CD4-positive, alpha-beta T cell (primary cell): ENCODE measurements at regions of chr17 and their contacts with region 1.

Region 1: GRCh38 chr17:78313735-78314648 is 45.9 kb downstream of the SOCS3 start:
- DNase-seq: peak; percentile 29 to 88 (median 72)
- ATAC-seq: peak; percentile 79
- H3K4me3 ChIP-seq: peak overlapping the region; percentile 26
- H3K4me3 Mint-ChIP-seq: peak overlapping the region; percentile 86
- H3K27ac ChIP-seq: no peak overlapping the region
- H3K27ac Mint-ChIP-seq: peak overlapping the region; percentile 74
- H3K4me1 ChIP-seq: peaks cover 55% of the 10 kb centered on the region
- H3K4me1 Mint-ChIP-seq: peaks cover 48% of the 10 kb centered on the region
- H3K27me3 ChIP-seq: no peaks in the 10 kb centered on the region
- H3K27me3 Mint-ChIP-seq: no peaks in the 10 kb centered on the region
- CTCF ChIP-seq: no peak

Region 2: GRCh38 chr17:78128551-78129350 is 185.2 kb before region 1 on chr17 and contains the start of gene TMC6:
- CTCF ChIA-PET with region 1: no interaction called
- POLR2A ChIA-PET with region 1: no interaction called
- intact Hi-C with region 1: no loop called
- DNase-seq: peak; percentile 58 to 89 (median 75)
- ATAC-seq: peak; percentile 43
- H3K4me3 ChIP-seq: peak within 1 kb of the TSS; percentile 94
- H3K4me3 Mint-ChIP-seq: peak within 1 kb of the TSS; percentile 100
- H3K27ac ChIP-seq: peak within 1 kb of the TSS; percentile 75 to 92
- H3K27ac Mint-ChIP-seq: peak within 1 kb of the TSS; percentile 96
- H3K4me1 ChIP-seq: peaks cover 76% of the 10 kb centered on the region
- H3K4me1 Mint-ChIP-seq: peaks cover 56% of the 10 kb centered on the region
- H3K27me3 ChIP-seq: no peaks in the 10 kb centered on the region
- H3K27me3 Mint-ChIP-seq: no peaks in the 10 kb centered on the region
- CTCF ChIP-seq: no peak
- total RNA-seq, gene TMC6: 645 to 659 TPM

Region 3: GRCh38 chr17:78329263-78330059 is 15.5 kb after region 1 on chr17:
- CTCF ChIA-PET with region 1: no interaction called
- POLR2A ChIA-PET with region 1: interaction called, 6 read pairs
- intact Hi-C with region 1: loop called in 1 of 2 experiments (anchors 2 kb)
- DNase-seq: peak in 3 of 14 experiments; percentile 43 to 72 (median 65)
- ATAC-seq: no peak
- H3K4me3 ChIP-seq: no peak overlapping the region
- H3K4me3 Mint-ChIP-seq: no peak overlapping the region
- H3K27ac ChIP-seq: no peak overlapping the region
- H3K27ac Mint-ChIP-seq: peak overlapping the region; percentile 37
- H3K4me1 ChIP-seq: peaks cover 39% of the 10 kb centered on the region
- H3K4me1 Mint-ChIP-seq: peaks cover 35% of the 10 kb centered on the region
- H3K27me3 ChIP-seq: no peaks in the 10 kb centered on the region
- H3K27me3 Mint-ChIP-seq: no peaks in the 10 kb centered on the region
- CTCF ChIP-seq: no peak

Region 4: DNA sequence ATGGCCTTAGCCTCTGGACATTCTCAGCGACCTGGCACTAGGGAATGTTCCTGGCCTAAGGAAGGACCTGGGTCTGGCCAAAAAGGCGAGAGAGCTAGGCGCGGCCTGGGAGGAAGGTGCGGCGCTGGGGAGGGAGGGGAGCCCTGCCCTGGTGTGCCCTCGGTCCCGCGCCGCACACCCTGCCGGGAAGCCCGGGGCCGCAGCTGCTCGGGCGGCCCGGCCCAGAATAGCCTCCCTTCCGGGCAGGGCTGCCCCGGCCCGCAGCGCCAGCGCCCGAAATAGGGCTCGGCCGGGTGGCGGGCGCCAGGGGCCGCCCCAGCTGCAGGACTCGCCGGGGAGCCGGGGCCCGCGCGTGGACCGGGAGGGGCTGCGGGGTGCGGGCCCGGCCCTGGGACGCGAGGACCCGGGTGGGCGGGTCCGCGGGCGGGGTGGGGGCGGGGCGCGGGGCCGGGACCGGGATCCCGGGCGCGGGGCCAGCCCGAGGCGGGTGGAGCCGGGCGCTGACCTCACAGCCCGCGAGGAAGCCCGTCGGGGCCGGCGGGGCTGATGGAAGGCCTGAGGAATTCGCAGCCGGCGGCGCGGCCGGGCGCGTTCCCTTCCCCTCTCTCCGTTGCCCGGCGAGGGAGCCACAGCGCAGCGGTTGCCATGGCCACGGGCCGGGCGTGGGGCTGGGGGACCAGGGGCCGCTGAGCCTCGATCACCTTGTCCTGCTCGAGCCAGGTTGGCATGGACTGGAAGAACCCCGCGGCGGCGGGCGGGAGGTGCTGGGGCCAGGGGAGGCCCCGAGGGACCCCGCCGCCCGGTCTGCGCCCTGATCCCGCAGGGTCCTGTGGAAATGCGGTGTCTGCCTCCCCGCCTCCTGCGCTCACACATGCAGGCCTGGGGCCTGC is 27.8 kb after region 1 on chr17:
- CTCF ChIA-PET with region 1: no interaction called
- POLR2A ChIA-PET with region 1: interaction called, 22 read pairs
- intact Hi-C with region 1: loop called in 1 of 2 experiments (anchors 2 kb)
- DNase-seq: peak in 3 of 14 experiments; percentile 33 to 67 (median 63)
- ATAC-seq: no peak
- H3K4me3 ChIP-seq: peak overlapping the region; percentile 19
- H3K4me3 Mint-ChIP-seq: peak overlapping the region; percentile 51
- H3K27ac ChIP-seq: peak overlapping the region in 1 of 2 donors; percentile 7
- H3K27ac Mint-ChIP-seq: peak overlapping the region; percentile 99
- H3K4me1 ChIP-seq: peaks cover 79% of the 10 kb centered on the region
- H3K4me1 Mint-ChIP-seq: peaks cover 73% of the 10 kb centered on the region
- H3K27me3 ChIP-seq: no peaks in the 10 kb centered on the region
- H3K27me3 Mint-ChIP-seq: no peaks in the 10 kb centered on the region
- CTCF ChIP-seq: no peak